ENCODE measurements at regions of chr10 and their contacts with region 1.

Region 1: GRCh38 chr10:8017277-8017676 is 37.2 kb upstream of the GATA3 start:
- DNase-seq: no peak
- H3K4me3 ChIP-seq: no peak overlapping the region
- H3K27ac ChIP-seq: no peak overlapping the region
- H3K4me1 ChIP-seq: no peaks in the 10 kb centered on the region
- H3K27me3 ChIP-seq: no peaks in the 10 kb centered on the region
- CTCF ChIP-seq: no peak
- EP300 ChIP-seq: no peak
- POLR2A ChIP-seq: no peak

Region 2: DNA sequence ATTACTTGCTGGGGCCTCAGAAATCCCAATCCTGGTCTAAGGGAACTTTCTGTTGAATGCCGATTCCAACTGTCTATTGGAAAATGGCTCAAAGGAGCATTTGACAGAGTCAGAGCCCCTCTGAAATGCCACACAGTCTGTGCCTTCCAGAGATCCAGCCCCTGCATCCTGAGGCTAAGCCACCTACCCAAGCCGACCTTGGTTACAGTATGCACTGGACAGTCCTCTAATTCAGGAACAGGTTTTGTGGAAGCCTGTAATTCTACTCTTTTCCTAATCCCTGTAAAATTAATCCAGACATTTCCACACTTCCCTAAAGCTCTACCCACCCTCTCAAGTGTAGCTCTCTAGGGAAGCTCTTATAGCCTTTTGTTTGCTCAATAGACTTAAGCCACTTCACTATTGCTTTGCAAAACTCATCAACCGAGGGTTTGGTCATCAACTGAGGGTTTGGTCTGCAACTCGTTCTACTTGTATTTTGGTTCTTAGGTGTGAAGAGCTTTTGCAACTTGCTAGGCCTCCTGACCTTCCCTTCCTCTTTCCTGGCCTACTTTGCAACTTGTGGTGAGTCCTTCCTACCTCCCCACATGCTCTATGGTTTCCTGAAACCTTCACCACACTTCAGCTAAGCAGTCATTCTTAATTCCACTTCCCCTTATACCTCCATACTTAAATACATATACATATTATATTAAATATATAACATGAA is 971.2 kb before region 1 on chr10:
- in situ Hi-C with region 1: no loop called
- intact Hi-C with region 1: loop called (anchors 10 kb)
- DNase-seq: peak; percentile 10
- H3K4me3 ChIP-seq: no peak overlapping the region
- H3K27ac ChIP-seq: no peak overlapping the region
- H3K4me1 ChIP-seq: no peaks in the 10 kb centered on the region
- H3K27me3 ChIP-seq: no peaks in the 10 kb centered on the region
- CTCF ChIP-seq: no peak
- EP300 ChIP-seq: no peak
- POLR2A ChIP-seq: no peak